Aorta (tissue), 5 donors: ENCODE measurements at regions of chr9 and their contacts with region 1.

Region 1: GRCh38 chr9:21334701-21335632 is at the start of gene KLHL9:
- DNase-seq: peak; percentile 96 to 97
- ATAC-seq: peak; percentile 99
- H3K4me3 ChIP-seq: peak within 1 kb of the TSS; percentile 83 to 98
- H3K27ac ChIP-seq: peak within 1 kb of the TSS; percentile 51 to 78
- H3K4me1 ChIP-seq: peaks cover 6 to 16% of the 10 kb centered on the region in 2 donors
- H3K27me3 ChIP-seq: no peaks in the 10 kb centered on the region
- total RNA-seq, gene KLHL9: 23.3 to 24.1 TPM

Region 2: DNA sequence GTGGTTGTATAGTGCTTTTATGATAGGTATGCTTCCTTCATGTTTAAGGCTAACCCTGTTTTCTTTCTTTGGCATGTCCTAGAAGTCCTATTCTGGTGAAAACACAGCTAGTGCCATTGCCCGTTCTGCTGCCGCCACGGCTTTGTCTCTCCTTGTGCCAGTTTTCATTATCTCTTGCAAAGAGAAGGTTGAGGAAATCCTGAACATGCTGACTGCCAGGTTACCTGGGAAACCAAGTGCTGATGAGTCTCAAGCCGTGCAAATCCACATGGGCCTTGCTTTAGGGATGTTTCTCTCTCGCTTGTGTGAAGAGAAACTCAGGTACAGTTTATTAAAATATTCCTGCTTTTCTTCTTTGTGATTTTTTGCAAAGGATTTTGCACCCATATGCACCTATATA is 405.7 kb before region 1 on chr9:
- intact Hi-C with region 1: no loop called
- DNase-seq: no peak
- ATAC-seq: no peak
- H3K4me3 ChIP-seq: no peak overlapping the region
- H3K27ac ChIP-seq: no peak overlapping the region
- H3K4me1 ChIP-seq: no peaks in the 10 kb centered on the region
- H3K27me3 ChIP-seq: no peaks in the 10 kb centered on the region

Region 3: DNA sequence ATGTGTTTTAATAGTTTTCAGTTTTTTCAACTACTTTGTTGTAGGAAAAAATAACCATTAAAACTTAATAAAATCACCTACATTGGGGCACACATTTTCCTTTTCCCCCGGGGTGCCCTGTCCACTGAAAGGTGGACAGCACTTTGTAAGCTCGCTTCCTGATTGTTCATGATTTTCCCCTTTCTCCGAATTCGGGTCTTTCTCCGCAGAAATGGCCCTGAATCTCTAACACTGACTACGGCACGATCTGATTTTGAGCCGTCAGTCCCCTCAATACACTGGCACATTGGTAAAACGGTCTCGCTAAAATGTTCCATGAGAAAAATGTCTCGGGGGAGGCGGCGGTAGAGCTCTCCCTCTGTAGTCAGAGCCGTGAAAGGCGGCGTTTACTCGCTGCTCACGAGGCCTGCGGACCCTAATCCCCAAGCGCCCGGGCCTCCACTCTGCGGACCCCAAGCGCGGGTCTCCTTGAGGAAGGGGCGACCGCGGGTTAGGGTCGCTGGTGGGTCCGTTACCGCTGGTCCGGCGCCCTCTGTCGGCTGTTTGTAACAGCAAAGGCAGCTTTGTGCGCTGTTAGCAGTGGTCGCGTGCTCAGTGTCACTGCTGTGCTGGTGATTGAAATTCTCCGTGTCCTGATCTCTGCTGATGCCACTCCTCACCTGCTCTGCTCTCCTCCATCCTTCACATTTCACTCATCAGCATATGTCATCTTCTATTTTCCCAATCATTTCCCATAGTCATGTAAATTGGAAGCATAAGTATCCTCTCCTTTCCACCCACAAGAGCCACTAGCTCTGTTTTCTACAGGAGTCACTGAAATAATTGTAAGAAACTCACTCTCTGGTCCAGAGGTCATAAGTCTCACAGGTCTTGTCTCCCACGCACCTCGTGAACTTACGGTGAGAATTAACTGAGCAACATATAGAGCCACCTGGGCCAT is 61.1 kb after region 1 on chr9:
- intact Hi-C with region 1: loop called in 1 of 2 experiments (anchors 5 kb)
- DNase-seq: peak; percentile 52 to 81
- ATAC-seq: peak; percentile 82
- H3K4me3 ChIP-seq: peak overlapping the region in 1 of 2 donors; percentile 37
- H3K27ac ChIP-seq: no peak overlapping the region
- H3K4me1 ChIP-seq: no peaks in the 10 kb centered on the region
- H3K27me3 ChIP-seq: peaks cover 0 to 6% of the 10 kb centered on the region in 2 donors

Region 4: DNA sequence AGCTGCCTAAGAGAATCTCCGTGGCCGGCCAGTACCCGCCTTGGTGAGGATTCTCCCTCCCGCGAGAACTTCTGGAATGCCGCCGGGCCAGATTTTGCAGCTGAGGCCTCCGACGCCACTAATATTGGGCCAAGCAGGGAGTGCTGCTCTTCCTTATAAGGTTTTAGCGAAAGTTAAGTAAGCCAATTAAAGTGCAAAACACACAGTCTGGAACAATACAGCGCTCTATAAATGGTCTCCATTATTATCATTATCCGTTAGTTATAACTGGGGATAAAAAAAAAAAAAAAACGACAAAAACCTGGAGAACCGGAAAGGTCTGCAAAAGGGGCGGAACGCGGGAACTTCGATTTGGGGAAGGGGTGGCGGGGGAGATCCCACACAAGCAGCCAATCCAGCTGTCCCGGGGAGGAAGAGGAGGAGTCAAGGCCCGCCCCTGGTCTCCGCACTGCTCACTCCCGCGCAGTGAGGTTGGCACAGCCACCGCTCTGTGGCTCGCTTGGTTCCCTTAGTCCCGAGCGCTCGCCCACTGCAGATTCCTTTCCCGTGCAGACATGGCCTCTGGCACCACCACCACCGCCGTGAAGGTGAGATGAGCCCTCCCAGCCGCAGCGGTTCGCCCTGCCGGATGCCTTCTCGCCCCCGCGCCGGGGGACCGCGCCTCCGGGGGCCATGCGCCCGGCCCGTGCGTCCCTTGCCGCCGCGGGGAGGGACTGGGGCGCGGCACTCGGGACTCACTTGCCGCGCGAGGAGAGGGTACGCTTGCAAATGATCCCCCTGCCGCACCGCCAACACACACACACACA is 467.4 kb after region 1 on chr9 and contains the start of gene MTAP:
- intact Hi-C with region 1: loop called (anchors 5 kb)
- DNase-seq: peak; percentile 96
- ATAC-seq: peak; percentile 97
- H3K4me3 ChIP-seq: peak within 1 kb of the TSS; percentile 32 to 37
- H3K27ac ChIP-seq: peak within 1 kb of the TSS; percentile 19 to 75
- H3K4me1 ChIP-seq: no peaks in the 10 kb centered on the region
- H3K27me3 ChIP-seq: no peaks in the 10 kb centered on the region
- total RNA-seq, gene MTAP: 28.5 to 41.1 TPM